Activated CD4-positive, alpha-beta T cell treated with anti-CD3 and anti-CD28 coated beads, Interleukin-2, amount 10 ng/mL, durations not matched to agents 24 days and 14 days (primary cell): ENCODE measurements at regions of chr10 and their contacts with region 1.

Region 1: GRCh38 chr10:86376852-86377796 is 10.5 kb upstream of the GRID1 start:
- DNase-seq: peak; percentile 95
- H3K4me3 Mint-ChIP-seq: no peak overlapping the region
- H3K27ac Mint-ChIP-seq: no peak overlapping the region
- H3K4me1 Mint-ChIP-seq: peaks cover 2% of the 10 kb centered on the region
- H3K27me3 Mint-ChIP-seq: peaks cover 46% of the 10 kb centered on the region

Region 2: DNA sequence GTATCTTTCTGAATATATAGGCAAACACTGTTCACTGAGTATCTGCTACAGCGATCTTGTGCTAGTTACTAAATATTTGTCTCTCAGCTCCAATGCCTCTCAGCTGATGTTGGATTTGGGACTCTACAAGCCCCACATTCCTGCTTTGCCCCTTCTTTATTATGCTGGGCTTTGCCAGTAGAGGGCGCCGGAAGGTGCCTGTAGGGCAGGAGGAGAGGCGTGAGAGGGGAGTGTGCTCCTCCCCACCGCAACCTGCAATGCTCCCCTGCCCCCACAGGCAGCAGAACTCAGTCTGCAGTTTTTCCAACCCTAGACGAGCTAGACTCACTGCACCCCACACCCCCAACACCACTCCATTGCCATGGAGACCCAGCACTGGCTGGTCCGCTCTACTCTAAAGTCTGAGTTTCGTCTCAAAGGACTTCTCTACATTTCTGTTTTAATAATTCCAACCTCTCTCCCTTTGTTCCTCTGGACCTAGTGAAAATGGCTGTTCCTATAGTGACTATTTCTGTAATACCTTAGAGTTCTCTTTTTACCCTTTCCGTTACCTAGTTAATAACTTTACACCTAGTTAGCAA is 1711.2 kb before region 1 on chr10:
- intact Hi-C with region 1: loop called (anchors 5 kb)
- DNase-seq: peak; percentile 73
- H3K4me3 Mint-ChIP-seq: no peak overlapping the region
- H3K27ac Mint-ChIP-seq: no peak overlapping the region
- H3K4me1 Mint-ChIP-seq: no peaks in the 10 kb centered on the region
- H3K27me3 Mint-ChIP-seq: no peaks in the 10 kb centered on the region

Region 3: GRCh38 chr10:84783386-84783785 is 1593.7 kb before region 1 on chr10:
- intact Hi-C with region 1: loop called (anchors 5 kb)
- DNase-seq: no peak
- H3K4me3 Mint-ChIP-seq: no peak overlapping the region
- H3K27ac Mint-ChIP-seq: no peak overlapping the region
- H3K4me1 Mint-ChIP-seq: no peaks in the 10 kb centered on the region
- H3K27me3 Mint-ChIP-seq: no peaks in the 10 kb centered on the region

Region 4: GRCh38 chr10:85995791-85996190 is 381.3 kb before region 1 on chr10:
- intact Hi-C with region 1: loop called (anchors 2 kb)
- DNase-seq: peak; percentile 59
- H3K4me3 Mint-ChIP-seq: no peak overlapping the region
- H3K27ac Mint-ChIP-seq: no peak overlapping the region
- H3K4me1 Mint-ChIP-seq: no peaks in the 10 kb centered on the region
- H3K27me3 Mint-ChIP-seq: peaks cover 13% of the 10 kb centered on the region

Region 5: DNA sequence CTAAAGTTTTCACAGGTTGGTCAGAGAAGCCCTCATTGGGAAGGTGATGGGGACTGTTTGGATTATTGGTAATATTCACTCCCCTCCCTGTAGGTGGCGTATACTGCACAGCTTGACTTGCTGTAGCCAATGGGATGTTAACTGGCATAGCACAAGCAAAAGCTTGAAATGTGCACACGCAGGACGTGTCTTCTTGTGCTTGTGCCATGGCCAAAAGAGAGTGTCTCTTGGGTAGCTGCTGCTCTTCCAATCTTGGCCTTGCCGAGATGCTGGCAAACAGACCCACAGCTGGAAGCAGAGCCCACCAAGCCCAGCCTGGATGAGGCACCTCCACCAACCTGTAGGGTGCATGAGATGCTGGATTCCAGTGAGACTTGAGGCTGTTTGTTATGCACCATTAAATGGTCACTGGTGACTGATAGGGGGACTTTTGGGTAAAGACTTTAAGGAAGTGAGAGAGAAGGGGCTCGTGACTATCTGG is 276.5 kb before region 1 on chr10:
- intact Hi-C with region 1: loop called (anchors 2 kb)
- DNase-seq: peak; percentile 61
- H3K4me3 Mint-ChIP-seq: no peak overlapping the region
- H3K27ac Mint-ChIP-seq: no peak overlapping the region
- H3K4me1 Mint-ChIP-seq: no peaks in the 10 kb centered on the region
- H3K27me3 Mint-ChIP-seq: peaks cover 7% of the 10 kb centered on the region

Region 6: GRCh38 chr10:86334488-86335085 is 42.5 kb before region 1 on chr10:
- intact Hi-C with region 1: no loop called
- DNase-seq: no peak
- H3K4me3 Mint-ChIP-seq: no peak overlapping the region
- H3K27ac Mint-ChIP-seq: no peak overlapping the region
- H3K4me1 Mint-ChIP-seq: no peaks in the 10 kb centered on the region
- H3K27me3 Mint-ChIP-seq: peaks cover 2% of the 10 kb centered on the region

Region 7: GRCh38 chr10:86755740-86756510 is 378.8 kb after region 1 on chr10:
- intact Hi-C with region 1: no loop called
- DNase-seq: peak; percentile 97
- H3K4me3 Mint-ChIP-seq: peak overlapping the region; percentile 85
- H3K27ac Mint-ChIP-seq: peak overlapping the region; percentile 86
- H3K4me1 Mint-ChIP-seq: peaks cover 40% of the 10 kb centered on the region
- H3K27me3 Mint-ChIP-seq: peaks cover 36% of the 10 kb centered on the region